SK-N-SH (cell line): ENCODE measurements at regions of chr7 and their contacts with region 1.

Region 1: GRCh38 chr7:26365077-26365900 is 73.6 kb downstream of the SNX10 start:
- DNase-seq: peak; percentile 60
- H3K4me3 ChIP-seq: no peak overlapping the region
- H3K27ac ChIP-seq: no peak overlapping the region
- H3K4me1 ChIP-seq: peaks cover 0 to 9% of the 10 kb centered on the region in 2 experiments; a peak in 2 of 4 replicates
- H3K27me3 ChIP-seq: peaks cover 22% of the 10 kb centered on the region; the same call in 1 of the 2 replicates
- CTCF ChIP-seq: peak; percentile 94
- EP300 ChIP-seq: no peak
- RAD21 ChIP-seq: peak; percentile 100

Region 2: DNA sequence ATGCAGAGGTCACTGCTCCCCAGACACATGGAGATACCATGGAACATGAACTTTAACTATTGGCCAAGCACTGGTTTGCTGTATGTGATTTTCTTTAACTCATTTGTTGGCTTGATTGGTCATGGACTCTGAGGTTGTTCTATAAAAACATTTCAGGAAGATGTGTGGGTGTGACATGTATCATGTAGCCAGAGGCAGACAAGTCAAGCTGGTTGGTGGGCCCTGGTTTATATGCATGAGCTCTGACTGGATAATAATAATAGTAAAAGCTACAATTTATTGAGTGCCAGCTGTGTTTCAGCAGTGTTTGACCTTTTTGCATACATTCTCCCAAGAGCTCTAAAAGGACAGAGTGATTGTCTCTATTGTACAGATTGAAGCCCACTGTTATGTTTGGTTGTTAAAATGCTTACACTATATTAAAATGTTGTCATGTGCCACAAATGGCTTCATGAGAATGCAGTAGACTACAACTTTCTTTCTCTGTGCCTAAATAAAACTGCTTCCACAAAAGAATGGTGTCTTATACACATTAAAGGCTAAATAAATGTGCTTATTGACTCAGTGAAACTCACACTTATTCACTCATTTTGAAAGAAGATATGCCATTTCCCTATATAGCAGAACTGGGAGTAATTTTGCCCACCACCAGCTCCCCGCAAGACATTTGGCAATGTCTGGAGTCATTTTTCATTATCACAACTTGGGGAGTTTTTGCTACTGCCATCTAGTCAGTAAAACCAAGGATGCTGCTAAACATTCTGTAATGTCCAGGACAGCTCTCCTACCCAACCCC is 456.9 kb before region 1 on chr7:
- CTCF ChIA-PET with region 1: interaction called, 12 read pairs
- POLR2A ChIA-PET with region 1: no interaction called
- DNase-seq: no peak
- H3K4me3 ChIP-seq: no peak overlapping the region
- H3K27ac ChIP-seq: no peak overlapping the region
- H3K4me1 ChIP-seq: no peaks in the 10 kb centered on the region
- H3K27me3 ChIP-seq: no peaks in the 10 kb centered on the region
- CTCF ChIP-seq: no peak
- EP300 ChIP-seq: no peak
- RAD21 ChIP-seq: no peak

Region 3: DNA sequence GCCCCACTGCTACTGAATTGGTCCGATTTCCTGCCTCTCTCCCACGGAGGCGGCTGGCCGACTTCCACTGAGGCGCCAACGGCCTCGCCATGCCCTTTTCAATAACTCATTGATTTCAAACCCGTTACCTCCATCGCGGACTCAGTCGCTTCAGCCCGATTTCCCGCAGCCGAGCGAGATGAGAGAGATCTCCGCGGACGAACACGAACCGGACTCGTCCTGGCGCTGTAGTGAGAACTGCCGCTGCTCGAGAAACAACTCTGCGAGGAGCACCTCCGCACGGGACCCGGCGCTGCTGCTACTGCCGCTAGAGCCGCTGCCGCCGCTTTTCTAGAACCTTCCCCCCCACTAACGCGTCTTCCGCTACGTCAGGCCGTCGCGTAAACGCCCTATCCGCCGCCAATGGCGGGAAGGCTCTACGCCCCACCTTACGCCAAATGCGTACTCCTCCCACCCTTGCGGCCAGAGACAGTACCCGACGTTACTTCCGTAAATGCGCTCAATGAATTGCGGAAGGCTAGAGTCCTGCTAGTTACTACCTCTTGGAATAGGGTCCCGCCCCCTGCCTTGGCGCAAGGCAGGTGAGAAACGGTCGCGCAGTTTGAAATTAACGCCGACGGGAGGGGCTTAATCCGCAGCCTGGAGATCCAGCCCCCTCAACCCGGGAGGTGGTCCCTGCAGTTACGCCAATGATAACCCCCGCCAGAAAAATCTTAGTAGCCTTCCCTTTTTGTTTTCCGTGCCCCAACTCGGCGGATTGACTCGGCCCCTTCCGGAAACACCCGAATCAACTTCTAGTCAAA is 164.6 kb before region 1 on chr7 and contains the start of gene HNRNPA2B1:
- CTCF ChIA-PET with region 1: interaction called, 26 read pairs
- POLR2A ChIA-PET with region 1: interaction called, 6 read pairs
- DNase-seq: peak; percentile 88
- H3K4me3 ChIP-seq: peak within 1 kb of the TSS; percentile 100
- H3K27ac ChIP-seq: peak within 1 kb of the TSS; percentile 99 to 100
- H3K4me1 ChIP-seq: peaks cover 24 to 37% of the 10 kb centered on the region in 2 experiments
- H3K27me3 ChIP-seq: no peaks in the 10 kb centered on the region
- CTCF ChIP-seq: no peak
- EP300 ChIP-seq: no peak
- RAD21 ChIP-seq: no peak
- polyA plus RNA-seq, gene HNRNPA2B1: 459 and 483 TPM in 2 replicates

Region 4: DNA sequence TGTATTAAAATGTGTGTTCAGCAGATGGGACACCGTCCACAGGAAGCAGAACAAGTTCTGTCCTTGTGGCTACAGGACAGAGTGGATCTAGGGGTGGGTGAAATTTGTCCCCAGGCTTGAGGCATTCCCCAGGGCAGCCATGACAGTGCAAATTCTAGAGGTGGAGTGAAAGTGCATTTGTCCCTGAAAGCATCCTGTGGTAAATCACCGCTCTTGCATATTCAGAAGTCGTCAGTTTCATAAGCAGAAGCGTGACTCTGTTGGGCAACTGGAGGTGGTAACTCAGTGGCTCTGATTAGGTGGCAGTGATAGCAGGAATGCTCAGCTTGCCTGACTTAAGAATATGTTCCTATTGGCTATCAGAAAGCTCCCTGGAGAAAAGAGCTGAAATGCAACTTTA is 23.0 kb after region 1 on chr7:
- CTCF ChIA-PET with region 1: interaction called, 28 read pairs
- POLR2A ChIA-PET with region 1: no interaction called
- DNase-seq: no peak
- H3K4me3 ChIP-seq: no peak overlapping the region
- H3K27ac ChIP-seq: no peak overlapping the region
- H3K4me1 ChIP-seq: no peaks in the 10 kb centered on the region
- H3K27me3 ChIP-seq: peaks cover 5% of the 10 kb centered on the region; the same call in 1 of the 2 replicates
- CTCF ChIP-seq: no peak
- EP300 ChIP-seq: no peak
- RAD21 ChIP-seq: no peak

Region 5: GRCh38 chr7:26520483-26520882 is 155.2 kb after region 1 on chr7:
- CTCF ChIA-PET with region 1: interaction called, 16 read pairs
- POLR2A ChIA-PET with region 1: no interaction called
- DNase-seq: no peak
- H3K4me3 ChIP-seq: no peak overlapping the region
- H3K27ac ChIP-seq: no peak overlapping the region
- H3K4me1 ChIP-seq: peaks cover 0 to 6% of the 10 kb centered on the region in 2 experiments; a peak in 1 of 4 replicates
- H3K27me3 ChIP-seq: no peaks in the 10 kb centered on the region
- CTCF ChIP-seq: no peak
- EP300 ChIP-seq: no peak
- RAD21 ChIP-seq: no peak

Region 6: GRCh38 chr7:26686448-26686981 is 321.2 kb after region 1 on chr7:
- CTCF ChIA-PET with region 1: interaction called, 11 read pairs
- POLR2A ChIA-PET with region 1: no interaction called
- DNase-seq: peak; percentile 17
- H3K4me3 ChIP-seq: no peak overlapping the region; a peak in 1 of 4 replicates
- H3K27ac ChIP-seq: no peak overlapping the region
- H3K4me1 ChIP-seq: peaks cover 0 to 5% of the 10 kb centered on the region in 2 experiments; a peak in 2 of 4 replicates
- H3K27me3 ChIP-seq: peaks cover 9% of the 10 kb centered on the region
- CTCF ChIP-seq: peak; percentile 98
- EP300 ChIP-seq: no peak
- RAD21 ChIP-seq: peak; percentile 83